Activated CD4-positive, alpha-beta T cell treated with anti-CD3 and anti-CD28 coated beads, Interleukin-2, amount 10 ng/mL, durations not matched to agents 24 days and 14 days (primary cell): ENCODE measurements at regions of chr2 and their contacts with region 1.

Region 1: GRCh38 chr2:168455648-168456520 is at the start of gene CERS6:
- DNase-seq: peak; percentile 96
- H3K4me3 Mint-ChIP-seq: no peak within 1 kb of the TSS
- H3K27ac Mint-ChIP-seq: peak within 1 kb of the TSS; percentile 85
- H3K4me1 Mint-ChIP-seq: peaks cover 25% of the 10 kb centered on the region
- H3K27me3 Mint-ChIP-seq: no peaks in the 10 kb centered on the region
- total RNA-seq, gene CERS6: 25.3 and 26.3 TPM in 2 replicates

Region 2: GRCh38 chr2:168375195-168375798 is 80.6 kb before region 1 on chr2:
- intact Hi-C with region 1: no loop called
- DNase-seq: no peak
- H3K4me3 Mint-ChIP-seq: no peak overlapping the region
- H3K27ac Mint-ChIP-seq: no peak overlapping the region
- H3K4me1 Mint-ChIP-seq: peaks cover 5% of the 10 kb centered on the region
- H3K27me3 Mint-ChIP-seq: peaks cover 18% of the 10 kb centered on the region

Region 3: DNA sequence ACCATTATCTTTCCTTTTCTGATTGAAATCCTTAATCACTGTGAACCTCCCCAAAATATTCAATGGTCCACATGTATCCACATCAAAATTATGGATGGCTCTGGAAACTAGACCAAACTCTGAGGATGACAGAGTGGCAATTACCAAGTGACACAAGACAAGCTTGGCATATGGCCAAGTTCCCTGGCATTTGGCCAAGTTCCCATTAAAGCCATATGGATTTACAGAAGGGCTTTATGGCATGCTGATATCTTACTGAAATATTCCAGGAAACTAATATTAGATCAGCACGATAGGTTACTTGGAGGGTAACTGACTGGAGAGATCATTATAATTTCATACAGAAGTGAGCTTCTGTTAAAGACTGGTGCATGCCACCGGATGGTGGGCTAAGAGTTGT is 21.7 kb before region 1 on chr2:
- intact Hi-C with region 1: loop called (anchors 1 kb)
- DNase-seq: no peak
- H3K4me3 Mint-ChIP-seq: no peak overlapping the region
- H3K27ac Mint-ChIP-seq: no peak overlapping the region
- H3K4me1 Mint-ChIP-seq: peaks cover 33% of the 10 kb centered on the region
- H3K27me3 Mint-ChIP-seq: no peaks in the 10 kb centered on the region

Region 4: GRCh38 chr2:168705534-168706470 is 249.9 kb after region 1 on chr2:
- intact Hi-C with region 1: loop called (anchors 5 kb)
- DNase-seq: no peak
- H3K4me3 Mint-ChIP-seq: no peak overlapping the region
- H3K27ac Mint-ChIP-seq: no peak overlapping the region
- H3K4me1 Mint-ChIP-seq: no peaks in the 10 kb centered on the region
- H3K27me3 Mint-ChIP-seq: no peaks in the 10 kb centered on the region